Naive thymus-derived CD8-positive, alpha-beta T cell (primary cell): ENCODE measurements at regions of chr13 and their contacts with region 1.

Region 1: DNA sequence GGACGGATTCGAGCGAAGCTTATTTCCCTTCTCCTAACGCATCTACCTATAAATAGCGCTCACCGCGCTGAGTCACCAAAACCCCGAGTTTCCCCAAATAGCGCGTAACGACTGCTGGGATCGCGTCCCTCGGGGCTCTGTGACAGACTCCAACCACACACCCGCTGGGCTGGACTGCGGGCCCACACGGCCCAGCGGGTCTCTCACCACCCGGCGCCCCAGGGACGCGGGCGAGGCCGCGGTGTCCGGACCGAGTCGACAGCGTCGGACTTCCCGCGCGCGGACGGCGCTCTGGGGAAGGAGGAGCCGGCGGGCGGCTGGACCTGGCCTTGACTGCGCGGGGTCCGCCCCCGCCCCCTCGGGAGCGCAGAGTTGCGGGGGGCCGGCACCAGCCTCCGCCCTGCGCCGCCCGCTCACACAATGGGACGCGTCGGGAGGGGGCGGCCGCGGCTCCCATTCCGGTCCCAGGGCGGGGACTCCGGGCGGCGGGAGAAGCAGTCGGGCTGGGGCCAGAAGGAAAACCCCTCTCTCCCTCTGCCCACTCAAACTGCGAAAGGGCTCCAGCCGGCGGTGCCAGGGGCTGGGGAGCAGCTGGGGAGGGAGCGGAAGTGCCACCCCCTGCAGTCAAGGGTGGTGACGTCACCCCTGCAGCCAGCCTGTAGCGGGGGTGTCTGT is 108.8 kb downstream of the KCNRG start:
- DNase-seq: peak in 8 of 10 donors; percentile 36 to 77 (median 60)
- ATAC-seq: peak; percentile 66 to 75
- H3K4me3 Mint-ChIP-seq: peak overlapping the region; percentile 86 to 96 (median 91)
- H3K27ac Mint-ChIP-seq: peak overlapping the region; percentile 76 to 98 (median 96)
- H3K4me1 Mint-ChIP-seq: peaks cover 19 to 57% (median 39%) of the 10 kb centered on the region in 4 donors
- H3K27me3 Mint-ChIP-seq: peaks cover 2 to 30% (median 11%) of the 10 kb centered on the region in 5 donors

Region 2: GRCh38 chr13:49996951-49997895 is 126.8 kb before region 1 on chr13 and contains the start of gene TRIM13:
- POLR2A ChIA-PET with region 1: interaction called, 61 read pairs
- DNase-seq: peak; percentile 64 to 86 (median 76)
- ATAC-seq: peak; percentile 83 to 88
- H3K4me3 Mint-ChIP-seq: peak within 1 kb of the TSS; percentile 82 to 93 (median 85)
- H3K27ac Mint-ChIP-seq: peak within 1 kb of the TSS; percentile 83 to 94 (median 89)
- H3K4me1 Mint-ChIP-seq: peaks cover 8 to 55% (median 38%) of the 10 kb centered on the region in 4 donors
- H3K27me3 Mint-ChIP-seq: no peaks in the 10 kb centered on the region
- polyA plus RNA-seq, gene TRIM13: 7.3 to 8.5 (median 7.5) TPM

Region 3: GRCh38 chr13:50081679-50082425 is 42.1 kb before region 1 on chr13:
- POLR2A ChIA-PET with region 1: interaction called, 176 read pairs
- DNase-seq: peak; percentile 89 to 99 (median 98)
- ATAC-seq: peak; percentile 74 to 76
- H3K4me3 Mint-ChIP-seq: peak overlapping the region; percentile 90 to 99 (median 96)
- H3K27ac Mint-ChIP-seq: peak overlapping the region; percentile 90 to 97 (median 94)
- H3K4me1 Mint-ChIP-seq: peaks cover 7 to 72% (median 33%) of the 10 kb centered on the region in 4 donors
- H3K27me3 Mint-ChIP-seq: peaks cover 2 to 25% (median 10%) of the 10 kb centered on the region in 5 donors

Region 4: DNA sequence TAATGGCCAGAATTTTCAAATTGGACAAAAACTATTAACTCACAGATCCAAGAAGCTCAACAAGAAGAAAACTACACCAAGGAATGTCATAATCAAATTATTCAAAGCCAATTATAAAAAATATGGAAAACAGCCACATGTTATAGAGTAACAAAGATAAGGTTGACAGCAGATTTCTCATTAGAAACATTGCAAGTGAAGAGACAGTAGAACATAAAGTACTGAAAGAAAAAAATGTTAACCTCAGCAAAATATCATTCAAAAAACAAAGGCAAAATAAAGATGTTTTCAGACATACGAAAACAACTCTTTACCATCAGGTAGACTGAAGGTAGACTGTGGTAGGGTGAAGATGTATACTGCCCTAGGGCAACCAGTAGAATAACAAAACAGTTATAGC is 25.3 kb before region 1 on chr13:
- POLR2A ChIA-PET with region 1: interaction called, 12 read pairs
- DNase-seq: no peak
- ATAC-seq: no peak
- H3K4me3 Mint-ChIP-seq: no peak overlapping the region
- H3K27ac Mint-ChIP-seq: peak overlapping the region in 1 of 10 donors; percentile 27
- H3K4me1 Mint-ChIP-seq: peaks cover 2 to 41% (median 9%) of the 10 kb centered on the region in 4 donors
- H3K27me3 Mint-ChIP-seq: no peaks in the 10 kb centered on the region

Region 5: GRCh38 chr13:50106559-50106958 is 17.4 kb before region 1 on chr13:
- POLR2A ChIA-PET with region 1: interaction called, 20 read pairs
- DNase-seq: peak in 3 of 10 donors; percentile 11 to 17 (median 16)
- ATAC-seq: peak; percentile 49 to 61
- H3K4me3 Mint-ChIP-seq: peak overlapping the region in 9 of 10 donors; percentile 0 to 80 (median 67)
- H3K27ac Mint-ChIP-seq: peak overlapping the region; percentile 17 to 93 (median 90)
- H3K4me1 Mint-ChIP-seq: peaks cover 7 to 64% (median 30%) of the 10 kb centered on the region in 4 donors
- H3K27me3 Mint-ChIP-seq: no peaks in the 10 kb centered on the region

Region 6: DNA sequence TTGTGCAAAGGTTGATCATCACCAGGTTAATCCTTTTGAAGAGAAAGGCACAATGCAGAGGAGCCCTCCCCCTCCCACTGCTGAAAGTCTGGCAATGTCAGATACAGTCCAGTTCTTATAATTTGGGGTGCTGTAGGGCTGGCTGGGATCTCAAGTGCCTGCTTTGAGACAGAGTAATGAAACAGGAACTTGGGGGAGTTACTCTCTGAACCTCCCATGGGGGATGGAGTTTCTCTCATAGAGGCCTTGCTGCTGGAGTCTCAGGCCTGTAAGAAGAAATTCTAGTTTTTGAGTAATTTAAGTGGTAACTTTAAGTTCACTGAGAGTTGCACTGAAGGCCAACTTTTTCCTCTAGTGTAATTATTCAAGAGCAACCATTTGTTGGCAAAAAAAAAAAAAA is 301.8 kb after region 1 on chr13:
- POLR2A ChIA-PET with region 1: no interaction called
- DNase-seq: no peak
- ATAC-seq: no peak
- H3K4me3 Mint-ChIP-seq: no peak overlapping the region
- H3K27ac Mint-ChIP-seq: no peak overlapping the region
- H3K4me1 Mint-ChIP-seq: peaks cover 0 to 37% (median 1%) of the 10 kb centered on the region in 4 donors
- H3K27me3 Mint-ChIP-seq: no peaks in the 10 kb centered on the region

Region 7: DNA sequence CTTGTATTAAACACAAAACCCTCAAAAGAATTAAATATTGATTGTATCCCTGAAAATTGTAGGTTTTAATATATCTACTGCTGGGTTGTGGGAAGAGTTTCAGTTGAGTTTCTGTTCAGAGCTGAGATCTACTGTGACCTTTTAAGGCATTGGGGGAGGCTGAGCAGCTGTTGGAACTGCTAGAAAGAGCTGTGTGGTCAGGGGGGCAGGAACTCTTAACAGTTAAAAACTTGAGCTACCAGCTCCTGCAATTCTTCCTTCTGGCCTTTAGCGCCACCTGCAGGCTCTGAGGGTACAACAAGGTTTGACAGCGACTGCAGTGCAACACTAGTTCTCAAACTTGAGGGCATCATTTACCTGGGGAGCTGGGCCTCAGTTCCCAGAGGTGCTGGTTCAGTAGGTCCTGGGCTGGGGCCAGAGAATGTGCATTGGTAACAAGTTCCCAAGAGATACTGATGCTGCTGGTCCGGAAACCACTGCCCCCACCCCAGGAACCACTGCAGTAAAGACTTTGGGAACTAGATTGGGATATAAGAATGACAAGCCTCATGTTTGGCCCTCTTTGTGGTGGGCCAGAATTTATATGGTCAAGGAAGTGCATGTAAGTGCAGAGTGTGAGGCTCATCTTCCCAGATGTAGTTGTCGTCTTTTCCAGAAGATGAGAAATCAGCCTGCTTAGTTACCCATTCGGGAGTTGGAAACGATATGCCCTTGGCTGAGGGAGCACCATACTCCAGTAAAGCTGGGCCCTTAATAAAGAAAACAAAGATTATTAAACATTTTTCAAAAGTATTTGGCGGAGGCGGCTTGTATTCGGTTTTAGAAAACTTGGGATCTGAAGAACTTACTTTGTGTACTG is 788.2 kb after region 1 on chr13:
- POLR2A ChIA-PET with region 1: interaction called, 37 read pairs
- DNase-seq: peak; percentile 77 to 95 (median 88)
- ATAC-seq: peak; percentile 48 to 60
- H3K4me3 Mint-ChIP-seq: peak overlapping the region; percentile 80 to 97 (median 90)
- H3K27ac Mint-ChIP-seq: peak overlapping the region; percentile 91 to 99 (median 96)
- H3K4me1 Mint-ChIP-seq: peaks cover 29 to 69% (median 55%) of the 10 kb centered on the region in 4 donors
- H3K27me3 Mint-ChIP-seq: no peaks in the 10 kb centered on the region